WTC11 (cell line): ENCODE measurements at regions of chr16 and their contacts with region 1.

Region 1: DNA sequence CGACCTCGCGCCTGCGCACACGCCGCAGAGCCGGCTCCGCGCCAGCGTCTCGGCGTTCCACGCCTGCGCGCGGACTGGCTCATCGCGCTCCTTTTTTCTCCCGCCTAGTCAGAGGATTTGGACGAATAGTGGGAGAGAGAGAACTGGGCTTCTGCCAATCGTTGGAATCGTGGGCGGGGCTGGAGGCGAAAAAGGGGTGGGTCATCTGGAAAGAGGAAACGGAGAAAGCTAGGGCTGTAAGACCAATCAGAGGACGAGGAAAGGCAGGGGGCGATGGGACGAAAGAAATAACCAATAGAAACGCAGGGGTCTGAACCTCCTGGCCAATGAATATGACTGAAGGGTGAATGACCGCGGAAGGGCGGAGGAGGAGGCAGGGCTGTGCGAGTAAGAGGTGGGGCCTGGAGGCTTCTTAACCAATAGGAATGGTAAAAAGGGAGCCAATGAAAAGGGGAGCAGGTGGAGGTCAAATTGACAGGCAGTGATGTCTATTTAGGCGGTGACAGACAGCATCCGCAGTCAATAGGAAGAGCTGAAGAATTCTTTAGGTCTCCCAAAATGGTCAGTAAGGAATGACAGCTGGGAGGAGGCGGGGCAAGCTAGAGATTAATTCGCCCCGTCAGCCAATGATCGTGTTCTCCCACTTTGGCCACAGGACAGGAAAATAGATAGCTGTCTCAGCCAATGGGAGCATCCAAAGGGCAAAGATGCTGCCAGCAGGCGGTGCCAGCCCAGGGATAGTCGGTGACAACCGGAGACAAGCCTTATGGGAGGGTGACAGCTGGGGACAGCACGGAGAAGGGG is at the start of gene TBC1D10B:
- DNase-seq: peak; percentile 99
- ATAC-seq: peak; percentile 91
- H3K4me3 Mint-ChIP-seq: peak within 1 kb of the TSS; percentile 80
- H3K27ac Mint-ChIP-seq: peak within 1 kb of the TSS; percentile 57
- H3K4me1 Mint-ChIP-seq: peaks cover 37% of the 10 kb centered on the region
- H3K27me3 Mint-ChIP-seq: no peaks in the 10 kb centered on the region; the same call in 1 of the 2 replicates
- CTCF ChIP-seq: no peak
- total RNA-seq, gene TBC1D10B: 33.4 to 40.5 TPM (median 34.6 TPM) in 3 replicates

Region 2: GRCh38 chr16:30355144-30355894 is 15.3 kb before region 1 on chr16 and contains the start of gene CD2BP2:
- CTCF ChIA-PET with region 1: interaction called, 28 read pairs
- POLR2A ChIA-PET with region 1: interaction called, 8 read pairs
- DNase-seq: peak; percentile 94
- ATAC-seq: peak; percentile 84
- H3K4me3 Mint-ChIP-seq: peak within 1 kb of the TSS; percentile 93
- H3K27ac Mint-ChIP-seq: peak within 1 kb of the TSS; percentile 98
- H3K4me1 Mint-ChIP-seq: peaks cover 26% of the 10 kb centered on the region
- H3K27me3 Mint-ChIP-seq: no peaks in the 10 kb centered on the region; the same call in 1 of the 2 replicates
- CTCF ChIP-seq: no peak
- total RNA-seq, gene CD2BP2: 51.0 to 56.6 TPM (median 51.1 TPM) in 3 replicates

Region 3: GRCh38 chr16:30395155-30395991 is 24.7 kb after region 1 on chr16 and contains the start of gene ZNF48:
- CTCF ChIA-PET with region 1: interaction called, 24 read pairs
- POLR2A ChIA-PET with region 1: interaction called, 13 read pairs
- DNase-seq: peak; percentile 85
- ATAC-seq: peak; percentile 81
- H3K4me3 Mint-ChIP-seq: peak within 1 kb of the TSS; percentile 97
- H3K27ac Mint-ChIP-seq: peak within 1 kb of the TSS; percentile 98
- H3K4me1 Mint-ChIP-seq: peaks cover 36% of the 10 kb centered on the region
- H3K27me3 Mint-ChIP-seq: peaks cover 4% of the 10 kb centered on the region; the same call in 1 of the 2 replicates
- CTCF ChIP-seq: no peak
- total RNA-seq, gene ZNF48: 31.3 to 39.3 TPM (median 32.1 TPM) in 3 replicates

Region 4: DNA sequence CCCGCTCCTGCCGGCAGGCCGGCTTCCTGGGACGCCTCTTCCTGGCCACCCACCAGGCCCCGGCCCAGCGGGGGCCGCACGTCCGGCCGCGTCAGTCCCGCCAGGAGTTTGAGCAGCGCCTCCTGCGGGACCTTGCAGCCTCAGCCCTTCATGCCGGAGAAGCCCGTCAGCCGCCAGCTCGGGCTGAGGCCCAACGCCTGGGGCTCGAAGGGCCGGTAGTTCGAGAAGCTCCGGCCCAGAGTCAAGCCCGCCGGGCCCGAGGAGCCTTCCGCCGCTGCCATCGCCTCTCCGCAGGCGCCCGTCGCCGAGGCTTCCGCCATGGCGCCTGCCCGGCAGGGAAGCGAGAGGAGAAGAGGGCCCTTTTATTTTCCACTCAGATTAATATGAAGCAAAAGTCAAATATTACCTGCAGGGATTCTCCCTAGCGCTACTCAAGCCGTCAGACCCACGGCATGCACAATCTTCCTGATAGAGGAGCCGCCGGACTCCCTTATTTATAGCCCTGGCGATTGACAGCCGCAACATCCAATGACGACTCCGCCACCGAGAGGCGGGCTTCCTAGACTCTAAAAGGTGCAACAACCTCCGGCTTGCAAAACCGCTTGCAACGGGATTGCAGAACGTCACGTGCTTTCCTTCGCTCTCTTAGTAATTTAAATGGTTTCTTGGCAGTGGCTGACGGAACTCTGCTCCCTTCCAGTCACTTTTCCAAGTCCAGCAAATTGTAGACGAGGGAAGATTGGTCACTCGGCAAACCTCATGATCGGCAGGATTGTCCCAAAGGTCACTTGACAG is 75.0 kb after region 1 on chr16 and contains the start of gene SEPHS2:
- CTCF ChIA-PET with region 1: no interaction called
- POLR2A ChIA-PET with region 1: no interaction called
- DNase-seq: peak; percentile 96
- ATAC-seq: peak; percentile 91
- H3K4me3 Mint-ChIP-seq: peak within 1 kb of the TSS; percentile 77
- H3K27ac Mint-ChIP-seq: peak within 1 kb of the TSS; percentile 98
- H3K4me1 Mint-ChIP-seq: peaks cover 22% of the 10 kb centered on the region
- H3K27me3 Mint-ChIP-seq: peaks cover 28% of the 10 kb centered on the region
- CTCF ChIP-seq: no peak
- total RNA-seq, gene SEPHS2: 50.4 to 55.2 TPM (median 53.5 TPM) in 3 replicates